HepG2 (cell line): ENCODE measurements at regions of chr1 and their contacts with region 1.

Region 1: GRCh38 chr1:206663832-206664652 is 20.7 kb upstream of the MAPKAPK2 start:
- DNase-seq: peak; percentile 43
- ATAC-seq: peak; percentile 83
- H3K4me3 ChIP-seq: no peak overlapping the region
- H3K27ac ChIP-seq: no peak overlapping the region
- H3K4me1 ChIP-seq: peaks cover 7% of the 10 kb centered on the region
- H3K27me3 ChIP-seq: peaks cover 2 to 29% of the 10 kb centered on the region in 2 experiments
- CTCF ChIP-seq: peak; percentile 84
- EP300 ChIP-seq: no peak
- POLR2A ChIP-seq: no peak
- RAD21 ChIP-seq: peak; percentile 71

Region 2: GRCh38 chr1:206489980-206490770 is 173.9 kb before region 1 on chr1:
- CTCF ChIA-PET with region 1: interaction called, 4 read pairs
- POLR2A ChIA-PET with region 1: no interaction called
- in situ Hi-C with region 1: no loop called
- intact Hi-C with region 1: loop called (anchors 1 kb)
- DNase-seq: peak; percentile 35
- ATAC-seq: peak; percentile 95
- H3K4me3 ChIP-seq: no peak overlapping the region
- H3K27ac ChIP-seq: no peak overlapping the region
- H3K4me1 ChIP-seq: no peaks in the 10 kb centered on the region
- H3K27me3 ChIP-seq: no peaks in the 10 kb centered on the region
- CTCF ChIP-seq: peak; percentile 97
- EP300 ChIP-seq: no peak
- POLR2A ChIP-seq: no peak
- RAD21 ChIP-seq: peak; percentile 80

Region 3: DNA sequence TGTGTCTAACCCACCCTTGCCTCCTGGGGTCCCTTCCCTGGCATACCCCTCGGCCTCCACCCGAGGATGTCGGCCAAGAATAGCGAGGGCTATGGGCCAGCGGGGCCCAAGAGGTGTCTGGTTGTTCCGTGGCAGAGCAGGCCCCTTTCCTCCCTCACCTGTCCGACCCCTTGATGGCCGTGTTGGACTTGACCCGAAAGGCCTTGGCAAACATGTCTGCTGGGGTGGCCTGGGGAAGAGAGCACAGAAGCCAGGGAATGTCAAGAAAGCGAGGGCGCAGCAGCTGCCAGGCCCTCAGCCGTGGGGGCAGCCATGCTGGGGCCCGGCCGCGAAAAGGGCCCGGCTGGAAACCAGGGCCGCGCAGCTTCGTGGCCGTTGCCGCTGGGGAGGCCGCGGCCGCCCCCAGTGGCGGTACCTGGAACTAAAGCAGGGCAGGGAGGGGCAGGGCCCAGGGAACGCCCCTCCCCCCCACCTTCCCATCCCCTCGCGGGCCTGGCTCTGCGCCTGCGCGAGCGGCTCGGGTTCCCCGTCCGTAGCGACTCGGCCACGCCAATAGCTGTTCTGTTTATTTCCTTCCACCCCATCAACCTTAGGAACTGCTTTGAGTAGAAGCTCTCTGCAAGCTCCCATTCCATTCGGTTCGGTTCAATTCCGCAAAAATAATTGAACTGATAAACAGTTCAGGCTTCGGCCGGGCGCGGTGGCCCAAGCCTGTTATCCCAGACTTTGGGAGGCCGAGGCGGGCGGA is 51.7 kb before region 1 on chr1 and contains the start of gene EIF2D:
- CTCF ChIA-PET with region 1: interaction called, 27 read pairs
- POLR2A ChIA-PET with region 1: no interaction called
- in situ Hi-C with region 1: no loop called
- intact Hi-C with region 1: loop called (anchors 2 kb)
- DNase-seq: peak; percentile 85
- ATAC-seq: peak; percentile 97
- H3K4me3 ChIP-seq: peak within 1 kb of the TSS; percentile 85 to 88 (median 88)
- H3K27ac ChIP-seq: peak within 1 kb of the TSS; percentile 93
- H3K4me1 ChIP-seq: peaks cover 10% of the 10 kb centered on the region
- H3K27me3 ChIP-seq: no peaks in the 10 kb centered on the region
- CTCF ChIP-seq: peak; percentile 94
- EP300 ChIP-seq: peak; percentile 58 to 62; a peak in 2 of 4 replicates
- POLR2A ChIP-seq: peak; percentile 88 to 96
- RAD21 ChIP-seq: peak; percentile 73
- total RNA-seq, gene EIF2D: 45.1 and 47.5 TPM in 2 replicates

Region 4: DNA sequence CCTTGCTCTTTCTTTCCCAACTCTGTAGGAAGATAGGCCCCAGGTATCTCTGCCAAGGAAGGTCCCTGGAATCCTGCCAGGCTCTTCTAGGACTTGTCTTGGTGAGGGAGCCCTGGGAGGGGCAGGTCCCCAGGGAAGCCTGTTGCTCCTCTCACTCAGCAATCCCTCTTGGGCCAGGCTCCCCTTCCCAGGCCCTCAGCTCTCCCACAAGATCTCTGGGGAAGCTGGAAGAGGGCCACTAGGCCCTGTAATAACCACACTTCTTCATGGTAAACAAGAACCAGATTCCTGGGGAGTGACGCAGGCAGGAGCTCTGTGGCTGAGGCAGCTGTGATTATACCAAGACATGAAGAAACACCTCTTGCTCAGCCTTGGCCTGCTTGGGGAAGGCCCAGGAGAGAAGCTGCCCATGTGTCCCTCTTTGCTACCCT is 10.7 kb after region 1 on chr1:
- CTCF ChIA-PET with region 1: no interaction called
- POLR2A ChIA-PET with region 1: no interaction called
- in situ Hi-C with region 1: no loop called
- intact Hi-C with region 1: no loop called
- DNase-seq: no peak
- ATAC-seq: no peak; the same call in 2 of the 3 replicates
- H3K4me3 ChIP-seq: no peak overlapping the region
- H3K27ac ChIP-seq: no peak overlapping the region
- H3K4me1 ChIP-seq: peaks cover 17% of the 10 kb centered on the region
- H3K27me3 ChIP-seq: peaks cover 3 to 31% of the 10 kb centered on the region in 2 experiments; a peak in 4 of 5 replicates
- CTCF ChIP-seq: no peak
- EP300 ChIP-seq: no peak
- POLR2A ChIP-seq: no peak
- RAD21 ChIP-seq: no peak